Activated T-helper 1 cell treated with anti-CD3 and anti-CD28 coated beads, Interleukin-12 subunit alpha, Interleukin-12 subunit beta, Interleukin-2, Interleukin-4 antibody, amounts not matched to agents 30 ng/mL and 10 ng/mL and 1 ng/mL, durations not matched to agents 14 hours and 24 hours and 36 hours (primary cell): ENCODE measurements at regions of chr19 and their contacts with region 1.

Region 1: DNA sequence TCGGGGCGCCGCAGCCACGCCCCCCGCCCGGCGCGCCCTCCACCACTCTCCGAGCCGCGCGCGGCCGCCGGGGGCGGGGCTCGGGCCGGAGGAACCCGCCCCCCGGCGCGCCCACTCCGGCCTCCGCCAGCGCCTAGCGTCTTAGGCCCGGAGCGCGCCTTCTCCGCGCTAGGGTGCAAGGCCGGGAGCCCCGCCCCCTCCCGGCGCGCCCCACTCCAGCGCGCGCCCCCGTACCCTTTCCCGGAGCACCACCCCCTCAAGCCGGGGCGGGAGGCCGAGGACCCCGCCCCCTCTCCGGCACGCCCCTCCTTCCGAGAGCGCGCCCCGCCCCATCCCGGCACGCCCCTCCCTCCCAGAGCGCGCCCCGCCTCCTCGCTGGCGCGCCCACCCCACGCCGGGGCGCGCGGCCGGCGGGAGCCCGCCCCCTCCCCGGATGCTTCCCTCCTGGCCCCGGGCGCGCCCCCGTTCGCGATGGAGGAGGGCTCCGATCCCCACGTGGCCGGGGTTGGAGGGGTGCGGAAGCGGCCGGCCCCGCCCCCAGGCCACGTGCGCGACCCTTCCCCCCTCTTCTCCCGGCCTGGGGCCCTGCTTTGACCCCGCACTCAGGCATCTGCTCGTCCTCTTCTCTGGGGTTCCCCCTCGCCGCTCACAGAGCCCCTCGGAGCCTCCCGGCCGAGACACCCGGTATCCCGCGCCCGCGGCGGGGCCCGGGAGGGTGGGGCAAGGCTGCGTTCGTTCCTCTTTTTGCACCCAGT is 524 bp upstream of the KLF16 start:
- DNase-seq: peak; percentile 91
- H3K4me3 Mint-ChIP-seq: peak overlapping the region; percentile 76
- H3K27ac Mint-ChIP-seq: peak overlapping the region; percentile 80
- H3K4me1 Mint-ChIP-seq: peaks cover 22% of the 10 kb centered on the region
- H3K27me3 Mint-ChIP-seq: peaks cover 2% of the 10 kb centered on the region

Region 2: DNA sequence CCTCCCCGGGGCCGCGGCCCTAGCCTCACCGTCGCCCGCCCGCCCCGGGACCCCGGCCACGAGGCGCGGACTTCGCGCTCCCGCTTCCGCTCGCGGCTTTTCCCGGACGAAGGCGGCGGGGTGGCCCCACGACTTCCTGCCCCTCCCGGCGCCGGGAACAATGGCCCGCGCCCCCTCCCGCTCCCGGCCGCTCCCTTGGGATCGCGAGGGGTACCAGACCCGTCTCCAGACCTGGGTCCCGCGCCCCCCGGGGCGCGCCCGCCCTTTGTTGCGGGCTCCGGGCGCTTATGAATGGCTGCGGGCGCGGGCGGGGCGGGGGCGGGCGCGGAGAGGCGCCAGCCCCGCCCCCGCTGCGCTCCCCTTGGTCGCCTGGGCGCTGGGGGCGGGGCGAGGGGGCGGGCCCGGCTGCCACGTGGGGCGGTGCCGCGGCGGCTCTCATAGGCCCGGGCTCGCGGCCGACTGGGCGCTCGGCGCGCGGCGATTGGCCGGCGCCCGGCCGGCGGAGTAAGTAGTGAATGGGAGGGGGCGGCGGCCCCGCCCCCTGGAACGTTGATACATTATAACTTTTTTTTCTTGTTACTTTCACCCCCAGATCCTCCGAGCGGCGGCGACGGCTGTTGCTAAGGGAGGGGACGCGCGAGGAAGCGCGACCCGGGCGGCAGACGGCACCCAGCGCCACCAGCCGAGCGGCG is 614.5 kb before region 1 on chr19:
- intact Hi-C with region 1: loop called (anchors 1 kb)
- DNase-seq: peak; percentile 91
- H3K4me3 Mint-ChIP-seq: peak overlapping the region; percentile 82
- H3K27ac Mint-ChIP-seq: peak overlapping the region; percentile 86
- H3K4me1 Mint-ChIP-seq: peaks cover 5% of the 10 kb centered on the region
- H3K27me3 Mint-ChIP-seq: no peaks in the 10 kb centered on the region

Region 3: GRCh38 chr19:1406774-1407499 is 457.0 kb before region 1 on chr19:
- intact Hi-C with region 1: loop called (anchors 5 kb)
- DNase-seq: peak; percentile 100
- H3K4me3 Mint-ChIP-seq: peak overlapping the region; percentile 76
- H3K27ac Mint-ChIP-seq: peak overlapping the region; percentile 83
- H3K4me1 Mint-ChIP-seq: peaks cover 33% of the 10 kb centered on the region
- H3K27me3 Mint-ChIP-seq: peaks cover 7% of the 10 kb centered on the region

Region 4: GRCh38 chr19:1875646-1876495 is 12.0 kb after region 1 on chr19:
- intact Hi-C with region 1: loop called (anchors 1 kb)
- DNase-seq: peak; percentile 87
- H3K4me3 Mint-ChIP-seq: peak overlapping the region; percentile 98
- H3K27ac Mint-ChIP-seq: peak overlapping the region; percentile 96
- H3K4me1 Mint-ChIP-seq: peaks cover 20% of the 10 kb centered on the region
- H3K27me3 Mint-ChIP-seq: peaks cover 2% of the 10 kb centered on the region

Region 5: GRCh38 chr19:1884719-1885334 is 20.9 kb after region 1 on chr19:
- intact Hi-C with region 1: loop called (anchors 1 kb)
- DNase-seq: no peak
- H3K4me3 Mint-ChIP-seq: peak overlapping the region; percentile 99
- H3K27ac Mint-ChIP-seq: peak overlapping the region; percentile 99
- H3K4me1 Mint-ChIP-seq: peaks cover 28% of the 10 kb centered on the region
- H3K27me3 Mint-ChIP-seq: no peaks in the 10 kb centered on the region

Region 6: DNA sequence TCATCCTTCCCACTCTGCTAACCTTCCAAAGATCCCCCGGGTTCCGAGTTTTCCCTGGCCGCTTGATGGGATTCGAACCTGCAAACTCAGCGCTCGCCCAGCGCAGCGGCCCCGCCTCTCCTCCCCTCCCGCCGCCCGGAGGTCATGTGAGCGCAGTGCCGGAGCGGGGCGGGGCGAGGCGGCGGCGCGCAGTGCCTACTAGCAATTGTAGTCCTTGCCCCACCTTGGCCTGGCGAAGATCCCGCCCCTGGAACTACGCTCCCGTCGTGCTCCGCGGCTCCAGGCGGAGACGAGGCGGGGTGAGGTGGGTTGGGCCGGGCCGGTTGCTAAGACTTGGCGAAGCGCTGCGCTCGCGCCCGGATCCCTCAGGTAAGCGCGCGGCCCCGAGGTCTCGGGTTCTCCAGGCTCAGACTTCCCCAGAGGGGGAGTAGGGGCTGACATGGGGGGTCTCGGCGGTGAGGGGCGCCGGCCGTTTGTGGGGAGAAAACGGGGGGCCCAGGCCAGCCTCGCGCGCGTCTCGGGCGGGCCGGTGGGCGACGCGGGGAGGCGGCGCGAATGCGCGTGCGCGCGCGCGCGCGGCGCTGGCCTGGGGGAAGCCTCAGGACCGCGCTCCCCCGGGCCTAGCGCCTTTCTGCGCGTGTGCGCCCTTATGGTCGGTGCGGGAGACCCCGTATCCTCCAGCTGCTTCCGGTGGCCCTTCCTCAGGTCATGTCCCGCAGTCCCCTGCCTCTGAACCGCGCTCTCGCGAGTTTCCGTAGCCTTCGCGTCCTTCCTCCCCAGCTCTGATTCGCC is 41.4 kb after region 1 on chr19 and contains the starts of genes ADAT3 and SCAMP4:
- intact Hi-C with region 1: loop called (anchors 1 kb)
- DNase-seq: peak; percentile 99
- H3K4me3 Mint-ChIP-seq: peak within 1 kb of the TSS; percentile 90
- H3K27ac Mint-ChIP-seq: peak within 1 kb of the TSS; percentile 83
- H3K4me1 Mint-ChIP-seq: peaks cover 27% of the 10 kb centered on the region
- H3K27me3 Mint-ChIP-seq: no peaks in the 10 kb centered on the region
- total RNA-seq, gene ADAT3: 8.4 and 9.6 TPM in 2 replicates
- total RNA-seq, gene SCAMP4: 38.0 and 41.5 TPM in 2 replicates